Adrenal gland (tissue), 19 donors: ENCODE measurements at regions of chr5 and their contacts with region 1.

Region 1: DNA sequence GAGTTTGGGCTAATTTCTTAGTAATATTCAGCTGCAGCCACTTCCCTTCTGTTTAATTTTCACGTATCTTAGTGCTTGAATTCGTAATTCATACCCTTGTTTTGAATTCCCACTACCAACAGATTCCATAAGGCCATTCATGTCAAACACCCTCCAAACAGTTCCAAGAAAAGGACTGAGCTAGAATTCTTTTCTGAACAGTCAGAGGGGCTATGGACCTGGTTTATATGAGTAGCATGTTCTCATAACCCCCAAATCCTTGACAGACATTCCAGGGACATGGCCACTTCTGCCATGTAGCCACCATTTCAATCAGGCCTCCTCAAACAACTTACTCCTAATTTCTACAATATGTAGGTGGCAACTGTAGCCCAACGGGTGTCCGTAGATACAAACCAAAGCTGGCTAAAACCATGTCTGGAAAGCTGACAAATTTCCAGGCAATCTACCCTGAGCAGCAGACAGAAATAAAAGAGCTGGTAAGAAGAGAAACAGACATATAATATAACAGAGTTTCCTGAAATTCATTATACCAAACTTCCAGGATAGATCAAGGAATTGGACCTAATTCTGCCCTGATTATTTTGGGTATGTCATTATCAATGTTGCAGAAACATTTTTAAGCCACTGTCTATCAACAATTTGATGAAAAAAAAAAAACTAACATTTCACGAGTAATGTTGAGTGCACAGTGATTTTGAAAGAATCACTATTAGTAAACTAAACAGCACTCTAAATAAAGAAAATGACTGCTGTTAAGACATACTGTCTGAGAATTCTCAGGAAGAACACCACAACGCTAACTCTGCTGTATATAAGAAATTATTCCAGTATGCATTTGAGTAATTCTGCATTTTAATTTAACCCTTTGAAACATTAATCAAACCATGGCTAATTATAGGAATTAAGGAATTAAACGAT is 40.7 kb downstream of the EBF1 start:
- DNase-seq: no peak
- H3K4me3 ChIP-seq: no peak overlapping the region
- H3K27ac ChIP-seq: peak overlapping the region in 1 of 5 donors; percentile 34
- H3K4me1 ChIP-seq: no peaks in the 10 kb centered on the region
- H3K27me3 ChIP-seq: no peaks in the 10 kb centered on the region
- CTCF ChIP-seq: no peak
- POLR2A ChIP-seq: no peak

Region 2: DNA sequence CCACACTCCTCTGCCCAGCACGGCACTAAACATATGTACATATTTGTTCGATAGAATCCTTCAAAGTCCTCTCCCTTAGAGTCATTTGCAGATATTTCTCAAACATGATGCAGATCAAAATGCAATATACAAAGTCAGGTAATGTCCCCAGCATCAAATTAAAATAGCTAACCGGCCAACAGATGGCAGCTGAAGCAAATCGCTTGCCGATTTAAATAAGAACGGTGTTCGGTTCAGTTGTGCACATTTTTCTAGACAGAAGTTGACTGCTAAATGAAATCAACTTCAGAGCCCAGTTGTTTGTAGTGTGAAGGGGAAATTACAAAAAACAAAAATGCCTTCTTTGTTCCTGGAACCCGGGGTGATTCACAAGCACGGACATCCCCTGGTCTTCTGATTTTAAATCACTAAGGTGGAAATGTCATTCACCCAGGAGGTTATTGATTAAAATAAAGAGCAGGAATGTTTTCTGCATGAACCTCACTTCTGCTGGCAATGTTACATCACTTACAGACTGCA is 178.4 kb before region 1 on chr5:
- intact Hi-C with region 1: no loop called
- DNase-seq: no peak
- H3K4me3 ChIP-seq: no peak overlapping the region
- H3K27ac ChIP-seq: no peak overlapping the region
- H3K4me1 ChIP-seq: peaks cover 0 to 10% of the 10 kb centered on the region in 2 donors
- H3K27me3 ChIP-seq: no peaks in the 10 kb centered on the region
- CTCF ChIP-seq: no peak
- POLR2A ChIP-seq: no peak

Region 3: GRCh38 chr5:159098603-159099436 is 39.8 kb after region 1 on chr5:
- intact Hi-C with region 1: loop called in 1 of 2 experiments (anchors 5 kb)
- DNase-seq: peak in 6 of 7 donors; percentile 52 to 62 (median 56)
- H3K4me3 ChIP-seq: peak overlapping the region in 2 of 4 donors; percentile 31 to 49
- H3K27ac ChIP-seq: peak overlapping the region in 4 of 5 donors; percentile 62 to 86 (median 76)
- H3K4me1 ChIP-seq: peaks cover 0 to 8% of the 10 kb centered on the region in 2 donors
- H3K27me3 ChIP-seq: no peaks in the 10 kb centered on the region
- CTCF ChIP-seq: no peak
- POLR2A ChIP-seq: peak in 1 of 2 donors; percentile 49

Region 4: GRCh38 chr5:159209438-159210305 is 150.7 kb after region 1 on chr5 and contains the start of gene RNF145:
- intact Hi-C with region 1: no loop called
- DNase-seq: peak; percentile 83 to 95 (median 86)
- H3K4me3 ChIP-seq: peak within 1 kb of the TSS; percentile 19 to 93 (median 84)
- H3K27ac ChIP-seq: peak within 1 kb of the TSS; percentile 84 to 98 (median 92)
- H3K4me1 ChIP-seq: peaks cover 23 to 38% of the 10 kb centered on the region in 2 donors
- H3K27me3 ChIP-seq: no peaks in the 10 kb centered on the region
- CTCF ChIP-seq: no peak
- POLR2A ChIP-seq: peak in 1 of 2 donors; percentile 46
- total RNA-seq, gene RNF145: 61.6 to 138 (median 69.7) TPM

Region 5: GRCh38 chr5:159230657-159231056 is 171.7 kb after region 1 on chr5:
- intact Hi-C with region 1: no loop called
- DNase-seq: peak in 1 of 7 donors; percentile 64
- H3K4me3 ChIP-seq: no peak overlapping the region
- H3K27ac ChIP-seq: no peak overlapping the region
- H3K4me1 ChIP-seq: no peaks in the 10 kb centered on the region
- H3K27me3 ChIP-seq: no peaks in the 10 kb centered on the region
- CTCF ChIP-seq: no peak
- POLR2A ChIP-seq: no peak

Region 6: GRCh38 chr5:160342403-160342941 is 1283.5 kb after region 1 on chr5:
- intact Hi-C with region 1: no loop called
- DNase-seq: peak; percentile 70 to 93 (median 90)
- H3K4me3 ChIP-seq: no peak overlapping the region
- H3K27ac ChIP-seq: peak overlapping the region; percentile 56 to 89 (median 65)
- H3K4me1 ChIP-seq: peaks cover 22 to 34% of the 10 kb centered on the region in 2 donors
- H3K27me3 ChIP-seq: no peaks in the 10 kb centered on the region
- CTCF ChIP-seq: no peak
- POLR2A ChIP-seq: peak in 1 of 2 donors; percentile 49